Vagina (tissue), 2 donors: ENCODE measurements at regions of chr4 and their contacts with region 1.

Region 1: GRCh38 chr4:53929955-53930798 is 134.2 kb downstream of the CHIC2 start:
- DNase-seq: no peak
- H3K4me3 ChIP-seq: no peak overlapping the region
- H3K27ac ChIP-seq: no peak overlapping the region
- H3K4me1 ChIP-seq: no peaks in the 10 kb centered on the region
- H3K27me3 ChIP-seq: no peaks in the 10 kb centered on the region
- CTCF ChIP-seq: peak; percentile 19 to 50 (median 36)
- POLR2A ChIP-seq: no peak

Region 2: GRCh38 chr4:54217642-54218495 is 287.7 kb after region 1 on chr4:
- intact Hi-C with region 1: loop called (anchors 5 kb)
- DNase-seq: peak in 1 of 2 donors; percentile 91
- H3K4me3 ChIP-seq: peak overlapping the region; percentile 13 to 52
- H3K27ac ChIP-seq: no peak overlapping the region
- H3K4me1 ChIP-seq: peaks cover 21% of the 10 kb centered on the region
- H3K27me3 ChIP-seq: no peaks in the 10 kb centered on the region
- CTCF ChIP-seq: peak; percentile 80 to 92 (median 89)
- POLR2A ChIP-seq: no peak